ENCODE measurements at regions of chr15 and their contacts with region 1.

Region 1: GRCh38 chr15:62125773-62126172 is 39.3 kb downstream of the C2CD4B start:
- DNase-seq: no peak
- ATAC-seq: no peak
- H3K4me3 ChIP-seq: no peak overlapping the region
- H3K4me3 Mint-ChIP-seq: no peak overlapping the region
- H3K27ac ChIP-seq: no peak overlapping the region
- H3K27ac Mint-ChIP-seq: no peak overlapping the region
- H3K4me1 ChIP-seq: peaks cover 11% of the 10 kb centered on the region
- H3K4me1 Mint-ChIP-seq: peaks cover 26 to 32% of the 10 kb centered on the region in 2 donors
- H3K27me3 ChIP-seq: no peaks in the 10 kb centered on the region
- H3K27me3 Mint-ChIP-seq: peaks cover 6 to 12% of the 10 kb centered on the region in 2 donors
- CTCF ChIP-seq: no peak

Region 2: DNA sequence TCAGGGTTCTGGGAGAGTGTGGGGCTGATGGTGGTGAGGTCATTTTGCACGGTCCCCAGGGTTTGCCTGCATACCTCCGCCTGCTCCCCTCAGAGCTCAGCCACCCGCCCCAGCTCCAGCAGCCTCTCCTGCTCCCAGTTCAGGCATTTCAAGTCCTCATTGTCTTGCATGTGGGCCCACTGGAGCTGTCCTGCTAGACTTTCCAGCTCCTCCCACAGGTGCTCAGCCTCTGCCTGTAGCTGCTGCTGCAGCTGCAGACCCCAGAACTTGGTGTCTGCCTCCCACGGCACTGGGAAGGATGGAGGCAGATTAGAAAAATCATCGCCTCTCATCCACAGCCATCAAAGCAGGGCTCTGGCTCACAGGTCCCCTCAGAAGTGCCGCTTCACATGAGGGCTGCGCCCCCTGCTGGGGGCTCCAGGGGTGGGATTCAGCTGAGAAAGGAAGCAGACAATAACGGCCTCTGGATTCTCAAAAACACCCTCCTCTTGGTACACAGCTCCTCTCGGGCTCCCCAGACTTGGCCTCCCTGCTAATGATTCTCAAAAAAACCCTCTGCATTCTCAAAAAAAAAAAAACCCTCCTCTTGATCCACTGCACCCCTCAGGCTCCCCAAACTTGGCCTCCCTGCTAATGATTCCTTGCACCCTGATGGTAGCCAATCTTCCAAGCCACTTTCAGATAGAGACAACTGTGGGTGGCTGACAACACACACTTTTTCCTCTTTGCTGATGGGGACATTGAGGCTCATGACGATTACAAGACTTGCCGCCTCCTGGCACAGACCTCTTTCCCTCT is 128.6 kb after region 1 on chr15:
- intact Hi-C with region 1: loop called (anchors 2 kb)
- DNase-seq: peak; percentile 31 to 68
- ATAC-seq: peak in 1 of 3 donors; percentile 67
- H3K4me3 ChIP-seq: no peak overlapping the region
- H3K4me3 Mint-ChIP-seq: no peak overlapping the region
- H3K27ac ChIP-seq: no peak overlapping the region
- H3K27ac Mint-ChIP-seq: no peak overlapping the region
- H3K4me1 ChIP-seq: no peaks in the 10 kb centered on the region
- H3K4me1 Mint-ChIP-seq: peaks cover 0 to 8% of the 10 kb centered on the region in 2 donors
- H3K27me3 ChIP-seq: no peaks in the 10 kb centered on the region
- H3K27me3 Mint-ChIP-seq: peaks cover 5 to 46% of the 10 kb centered on the region in 2 donors
- CTCF ChIP-seq: peak; percentile 36